Activated CD4-positive, alpha-beta T cell treated with anti-CD3 and anti-CD28 coated beads for 36 hours (primary cell): ENCODE measurements at regions of chr1 and their contacts with region 1.

Region 1: GRCh38 chr1:212414328-212415106 is at the start of gene PACC1:
- DNase-seq: peak; percentile 93
- ATAC-seq: peak; percentile 98
- H3K4me3 Mint-ChIP-seq: peak within 1 kb of the TSS; percentile 93
- H3K27ac Mint-ChIP-seq: peak within 1 kb of the TSS; percentile 92
- H3K4me1 Mint-ChIP-seq: peaks cover 22% of the 10 kb centered on the region
- H3K27me3 Mint-ChIP-seq: no peaks in the 10 kb centered on the region
- total RNA-seq, gene PACC1: 9.2 to 13.8 TPM

Region 2: GRCh38 chr1:211675230-211676105 is 739.0 kb before region 1 on chr1 and contains the start of gene NEK2:
- CTCF ChIA-PET with region 1: interaction called, 4 read pairs
- POLR2A ChIA-PET with region 1: no interaction called
- intact Hi-C with region 1: loop called in 1 of 2 experiments (anchors 2 kb)
- DNase-seq: peak; percentile 94
- ATAC-seq: peak; percentile 98
- H3K4me3 Mint-ChIP-seq: peak within 1 kb of the TSS; percentile 94
- H3K27ac Mint-ChIP-seq: peak within 1 kb of the TSS; percentile 84
- H3K4me1 Mint-ChIP-seq: peaks cover 6% of the 10 kb centered on the region
- H3K27me3 Mint-ChIP-seq: no peaks in the 10 kb centered on the region
- total RNA-seq, gene NEK2: 32.3 to 38.8 TPM

Region 3: GRCh38 chr1:212077051-212077450 is 337.5 kb before region 1 on chr1:
- CTCF ChIA-PET with region 1: no interaction called
- POLR2A ChIA-PET with region 1: no interaction called
- intact Hi-C with region 1: no loop called
- DNase-seq: no peak
- ATAC-seq: no peak
- H3K4me3 Mint-ChIP-seq: no peak overlapping the region
- H3K27ac Mint-ChIP-seq: no peak overlapping the region
- H3K4me1 Mint-ChIP-seq: no peaks in the 10 kb centered on the region
- H3K27me3 Mint-ChIP-seq: no peaks in the 10 kb centered on the region

Region 4: DNA sequence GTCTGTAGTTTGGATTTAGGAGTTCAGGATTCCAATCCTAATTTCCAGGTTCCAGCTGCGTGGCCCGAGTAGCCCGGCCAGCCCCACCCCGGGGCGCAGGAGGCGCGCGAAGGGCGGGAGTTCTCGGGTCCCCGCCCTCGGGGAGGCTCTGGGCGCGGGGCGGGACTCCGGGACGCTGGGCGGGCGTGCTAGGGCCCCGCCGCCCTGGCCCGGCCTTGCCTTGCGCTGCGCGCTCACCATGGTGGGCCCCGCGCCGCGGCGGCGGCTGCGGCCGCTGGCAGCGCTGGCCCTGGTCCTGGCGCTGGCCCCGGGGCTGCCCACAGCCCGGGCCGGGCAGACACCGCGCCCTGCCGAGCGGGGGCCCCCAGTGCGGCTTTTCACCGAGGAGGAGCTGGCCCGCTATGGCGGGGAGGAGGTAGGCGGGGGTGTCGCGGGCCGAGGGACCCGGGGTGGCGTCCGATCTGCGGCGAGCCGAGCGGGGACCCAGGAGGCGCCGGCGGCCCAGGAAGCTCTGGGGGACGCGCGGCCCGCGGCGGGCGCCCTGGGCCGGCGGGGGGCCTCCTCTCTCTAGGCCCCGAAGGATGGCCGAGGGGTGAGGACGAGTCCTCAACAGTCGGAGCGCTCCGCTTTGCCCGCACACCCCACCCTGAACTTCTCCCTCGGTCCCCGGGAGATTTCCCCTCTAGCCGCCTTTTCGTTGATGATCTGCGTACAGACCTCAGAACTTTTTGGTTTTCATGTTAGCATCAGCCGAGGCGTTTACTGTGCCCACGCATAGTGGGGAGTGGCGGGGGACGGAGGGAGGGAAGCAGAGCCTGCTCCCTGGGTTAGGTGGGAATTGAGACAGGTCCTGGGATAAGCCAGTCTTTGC is 18.4 kb after region 1 on chr1 and contains the start of gene NENF:
- CTCF ChIA-PET with region 1: interaction called, 6 read pairs
- POLR2A ChIA-PET with region 1: interaction called, 4 read pairs
- intact Hi-C with region 1: loop called (anchors 1 kb)
- DNase-seq: peak; percentile 88
- ATAC-seq: peak; percentile 99
- H3K4me3 Mint-ChIP-seq: peak within 1 kb of the TSS; percentile 75
- H3K27ac Mint-ChIP-seq: peak within 1 kb of the TSS; percentile 56
- H3K4me1 Mint-ChIP-seq: peaks cover 39% of the 10 kb centered on the region
- H3K27me3 Mint-ChIP-seq: no peaks in the 10 kb centered on the region
- total RNA-seq, gene NENF: 30.8 to 34.1 TPM